CD8-positive, alpha-beta T cell (primary cell): ENCODE measurements at regions of chr13 and their contacts with region 1.

Region 1: GRCh38 chr13:66842766-66843165 is 387.4 kb downstream of the PCDH9 start:
- DNase-seq: no peak
- ATAC-seq: no peak
- H3K4me3 ChIP-seq: no peak overlapping the region
- H3K4me3 Mint-ChIP-seq: no peak overlapping the region
- H3K27ac ChIP-seq: no peak overlapping the region
- H3K27ac Mint-ChIP-seq: no peak overlapping the region
- H3K4me1 ChIP-seq: no peaks in the 10 kb centered on the region
- H3K4me1 Mint-ChIP-seq: no peaks in the 10 kb centered on the region
- H3K27me3 ChIP-seq: no peaks in the 10 kb centered on the region
- H3K27me3 Mint-ChIP-seq: no peaks in the 10 kb centered on the region
- CTCF ChIP-seq: no peak

Region 2: GRCh38 chr13:66087269-66087710 is 755.5 kb before region 1 on chr13:
- CTCF ChIA-PET with region 1: no interaction called
- POLR2A ChIA-PET with region 1: no interaction called
- intact Hi-C with region 1: no loop called
- DNase-seq: no peak
- ATAC-seq: no peak
- H3K4me3 ChIP-seq: no peak overlapping the region
- H3K4me3 Mint-ChIP-seq: no peak overlapping the region
- H3K27ac ChIP-seq: no peak overlapping the region
- H3K27ac Mint-ChIP-seq: no peak overlapping the region
- H3K4me1 ChIP-seq: no peaks in the 10 kb centered on the region
- H3K4me1 Mint-ChIP-seq: no peaks in the 10 kb centered on the region
- H3K27me3 ChIP-seq: no peaks in the 10 kb centered on the region
- H3K27me3 Mint-ChIP-seq: no peaks in the 10 kb centered on the region
- CTCF ChIP-seq: no peak

Region 3: GRCh38 chr13:66809485-66809884 is 33.3 kb before region 1 on chr13:
- CTCF ChIA-PET with region 1: no interaction called
- POLR2A ChIA-PET with region 1: no interaction called
- intact Hi-C with region 1: loop called in 1 of 2 experiments (anchors 1 kb)
- DNase-seq: no peak
- ATAC-seq: no peak
- H3K4me3 ChIP-seq: no peak overlapping the region
- H3K4me3 Mint-ChIP-seq: no peak overlapping the region
- H3K27ac ChIP-seq: no peak overlapping the region
- H3K27ac Mint-ChIP-seq: no peak overlapping the region
- H3K4me1 ChIP-seq: no peaks in the 10 kb centered on the region
- H3K4me1 Mint-ChIP-seq: no peaks in the 10 kb centered on the region
- H3K27me3 ChIP-seq: no peaks in the 10 kb centered on the region
- H3K27me3 Mint-ChIP-seq: no peaks in the 10 kb centered on the region
- CTCF ChIP-seq: no peak

Region 4: GRCh38 chr13:66821551-66821950 is 21.2 kb before region 1 on chr13:
- CTCF ChIA-PET with region 1: no interaction called
- POLR2A ChIA-PET with region 1: no interaction called
- intact Hi-C with region 1: no loop called
- DNase-seq: no peak
- ATAC-seq: no peak
- H3K4me3 ChIP-seq: no peak overlapping the region
- H3K4me3 Mint-ChIP-seq: no peak overlapping the region
- H3K27ac ChIP-seq: no peak overlapping the region
- H3K27ac Mint-ChIP-seq: no peak overlapping the region
- H3K4me1 ChIP-seq: no peaks in the 10 kb centered on the region
- H3K4me1 Mint-ChIP-seq: no peaks in the 10 kb centered on the region
- H3K27me3 ChIP-seq: no peaks in the 10 kb centered on the region
- H3K27me3 Mint-ChIP-seq: no peaks in the 10 kb centered on the region
- CTCF ChIP-seq: no peak

Region 5: GRCh38 chr13:66915596-66916185 is 72.9 kb after region 1 on chr13:
- CTCF ChIA-PET with region 1: no interaction called
- POLR2A ChIA-PET with region 1: no interaction called
- intact Hi-C with region 1: no loop called
- DNase-seq: peak in 1 of 9 experiments; percentile 1
- ATAC-seq: no peak
- H3K4me3 ChIP-seq: no peak overlapping the region
- H3K4me3 Mint-ChIP-seq: no peak overlapping the region
- H3K27ac ChIP-seq: no peak overlapping the region
- H3K27ac Mint-ChIP-seq: no peak overlapping the region
- H3K4me1 ChIP-seq: no peaks in the 10 kb centered on the region
- H3K4me1 Mint-ChIP-seq: peaks cover 11% of the 10 kb centered on the region
- H3K27me3 ChIP-seq: no peaks in the 10 kb centered on the region
- H3K27me3 Mint-ChIP-seq: no peaks in the 10 kb centered on the region
- CTCF ChIP-seq: no peak

Region 6: GRCh38 chr13:67069117-67069767 is 226.5 kb after region 1 on chr13:
- CTCF ChIA-PET with region 1: no interaction called
- POLR2A ChIA-PET with region 1: no interaction called
- intact Hi-C with region 1: no loop called
- DNase-seq: no peak
- ATAC-seq: no peak
- H3K4me3 ChIP-seq: no peak overlapping the region
- H3K4me3 Mint-ChIP-seq: no peak overlapping the region
- H3K27ac ChIP-seq: no peak overlapping the region
- H3K27ac Mint-ChIP-seq: no peak overlapping the region
- H3K4me1 ChIP-seq: no peaks in the 10 kb centered on the region
- H3K4me1 Mint-ChIP-seq: no peaks in the 10 kb centered on the region
- H3K27me3 ChIP-seq: no peaks in the 10 kb centered on the region
- H3K27me3 Mint-ChIP-seq: no peaks in the 10 kb centered on the region
- CTCF ChIP-seq: no peak